ENCODE measurements at regions of chr2 and their contacts with region 1.

Region 1: DNA sequence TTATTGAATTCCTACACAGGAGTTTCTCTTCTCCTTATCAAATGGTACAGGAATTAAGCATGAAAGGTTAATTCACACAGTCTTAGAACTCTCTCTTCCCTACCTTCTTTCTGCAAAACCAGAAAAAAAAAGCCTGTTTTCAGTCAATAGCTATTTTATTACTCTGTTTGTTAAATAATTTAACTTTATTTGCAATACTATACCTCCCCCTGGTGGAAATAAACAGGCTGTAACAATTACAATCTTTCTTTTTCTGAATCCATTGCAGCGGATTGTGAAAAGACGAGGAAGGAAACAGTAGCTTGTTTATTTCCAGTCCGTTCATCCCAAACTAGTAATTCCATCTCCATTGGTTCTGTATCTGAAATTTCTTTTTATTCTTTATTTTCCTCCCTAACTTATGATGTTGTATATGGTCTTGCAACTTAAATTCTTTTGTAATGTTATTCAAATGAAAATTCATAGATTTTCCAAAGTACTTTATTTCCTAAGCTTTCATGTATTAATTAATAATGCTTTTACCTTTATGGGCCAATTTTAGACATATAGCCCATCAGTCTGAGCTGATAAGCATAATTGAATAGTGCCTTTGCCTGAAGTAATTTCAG is 165.2 kb downstream of the SH3BP4 start:
- DNase-seq: no peak

Region 2: GRCh38 chr2:234544659-234545611 is 572.1 kb before region 1 on chr2:
- intact Hi-C with region 1: loop called (anchors 5 kb)
- DNase-seq: peak; percentile 89